ENCODE measurements at regions of chr4 and their contacts with region 1.

Region 1: DNA sequence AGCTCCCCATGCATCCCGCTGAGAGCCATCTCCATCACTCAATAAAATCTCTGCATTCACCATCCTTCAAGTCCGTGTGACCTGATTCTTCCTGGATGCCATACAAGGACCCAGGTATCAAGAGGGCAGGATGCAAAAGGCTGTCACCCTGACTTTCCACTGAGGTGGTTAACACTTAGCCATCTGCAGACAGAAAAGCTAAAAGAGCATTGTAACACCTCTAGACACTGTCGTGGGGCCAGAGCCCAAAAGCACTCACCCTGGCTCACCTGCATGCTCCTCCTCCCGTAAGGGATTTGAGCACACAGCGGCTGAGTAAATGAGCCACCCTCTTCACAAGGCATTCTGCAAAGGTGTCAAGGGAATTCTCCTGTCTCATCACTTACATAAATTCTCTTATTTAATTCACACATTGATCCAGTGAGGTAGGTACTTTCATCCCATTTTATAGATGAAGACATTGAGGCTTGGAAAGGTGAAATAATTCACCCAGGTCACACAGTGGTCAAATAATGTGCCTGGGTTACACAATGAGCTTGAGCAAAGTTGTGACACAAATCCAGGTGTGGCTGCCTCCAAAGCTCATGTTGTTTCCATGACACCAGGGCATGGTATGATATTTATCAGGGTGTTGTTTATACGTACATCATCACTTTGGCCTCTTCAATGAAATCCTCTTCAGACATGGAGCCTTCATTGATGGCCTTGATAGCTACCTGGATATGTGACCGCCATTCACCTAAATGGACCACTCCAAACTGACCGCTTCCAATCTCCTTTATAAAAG is 48.0 kb downstream of the TXK start:
- DNase-seq: no peak
- H3K4me3 ChIP-seq: no peak overlapping the region
- H3K27ac ChIP-seq: no peak overlapping the region
- H3K4me1 ChIP-seq: no peaks in the 10 kb centered on the region
- H3K27me3 ChIP-seq: no peaks in the 10 kb centered on the region
- CTCF ChIP-seq: no peak
- EP300 ChIP-seq: no peak
- POLR2A ChIP-seq: no peak

Region 2: DNA sequence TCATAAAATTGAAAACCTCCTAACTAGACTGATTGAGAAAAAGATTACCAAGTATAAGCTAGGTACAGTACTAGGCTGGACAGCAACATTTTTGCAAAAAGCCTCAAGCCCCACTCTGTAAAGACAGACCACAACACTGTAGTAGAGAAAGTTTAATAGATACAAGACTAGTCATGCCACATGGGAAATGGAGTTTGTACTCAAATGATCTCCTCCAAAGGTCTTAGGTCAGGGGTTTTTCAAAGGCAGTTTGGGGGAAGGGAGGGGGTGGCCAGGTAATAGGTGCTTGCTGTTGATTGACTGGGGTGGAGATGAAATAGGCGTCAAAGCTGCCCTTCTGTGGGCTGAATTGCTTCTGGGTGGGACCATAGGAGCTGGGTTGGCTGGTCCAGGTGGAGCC is 83.7 kb before region 1 on chr4:
- intact Hi-C with region 1: loop called (anchors 2 kb)
- DNase-seq: no peak
- H3K4me3 ChIP-seq: no peak overlapping the region
- H3K27ac ChIP-seq: no peak overlapping the region
- H3K4me1 ChIP-seq: no peaks in the 10 kb centered on the region
- H3K27me3 ChIP-seq: peaks cover 0 to 3% (median 0%) of the 10 kb centered on the region in 4 donors
- CTCF ChIP-seq: no peak
- EP300 ChIP-seq: no peak
- POLR2A ChIP-seq: no peak

Region 3: DNA sequence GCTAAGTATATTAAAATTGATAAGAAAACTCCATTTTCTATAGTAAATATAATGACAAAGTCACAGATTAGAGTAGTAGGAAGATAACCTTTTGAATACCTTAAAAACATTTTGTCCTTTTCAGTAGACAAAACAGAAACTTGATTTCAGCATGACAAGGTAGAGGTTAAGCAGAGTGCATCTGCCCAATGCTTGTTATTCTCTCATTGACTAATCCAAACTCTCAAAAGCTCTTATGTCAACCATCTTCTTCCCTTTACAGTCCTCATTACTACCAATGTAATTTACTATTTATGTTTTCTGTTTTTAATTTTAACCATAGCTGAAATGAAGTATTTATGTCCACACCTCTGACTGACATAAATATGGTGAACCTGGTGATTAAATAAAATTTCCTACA is 58.4 kb before region 1 on chr4:
- intact Hi-C with region 1: no loop called
- DNase-seq: no peak
- H3K4me3 ChIP-seq: no peak overlapping the region
- H3K27ac ChIP-seq: no peak overlapping the region
- H3K4me1 ChIP-seq: peaks cover 4 to 7% (median 5%) of the 10 kb centered on the region in 4 donors
- H3K27me3 ChIP-seq: no peaks in the 10 kb centered on the region
- CTCF ChIP-seq: no peak
- EP300 ChIP-seq: no peak
- POLR2A ChIP-seq: no peak

Region 4: DNA sequence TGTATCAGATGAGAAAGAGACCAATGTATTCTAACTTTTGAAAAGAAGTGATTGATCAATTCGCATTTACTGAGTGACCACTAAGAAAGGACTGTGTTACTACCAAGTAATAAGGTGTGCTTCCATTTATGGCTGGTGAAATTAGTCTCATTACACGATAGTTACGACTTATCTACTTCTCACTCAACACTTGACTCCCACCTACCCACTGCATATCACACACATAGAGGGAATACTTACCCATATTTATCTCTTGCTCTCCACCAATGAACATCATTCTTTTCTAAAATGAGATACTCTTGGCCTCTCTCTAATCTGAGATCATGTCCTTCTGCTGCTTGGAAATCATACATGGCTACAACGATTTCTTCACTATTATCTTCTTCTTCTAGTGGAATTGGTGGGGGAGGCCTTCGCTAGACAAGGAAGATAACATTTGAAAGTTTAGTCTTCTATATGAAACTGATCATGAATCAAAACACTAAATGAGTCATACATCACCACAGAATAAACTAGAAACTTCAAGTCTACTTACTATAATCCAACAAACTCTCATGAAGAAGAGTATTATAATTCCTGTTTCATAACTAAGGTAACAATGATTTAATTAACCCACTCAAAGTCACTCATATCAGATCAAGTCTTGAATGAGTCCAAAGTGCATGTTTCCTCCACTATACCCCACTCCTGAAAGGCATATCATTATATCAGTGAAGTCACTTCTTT is 81.7 kb after region 1 on chr4:
- intact Hi-C with region 1: no loop called
- DNase-seq: no peak
- H3K4me3 ChIP-seq: no peak overlapping the region
- H3K27ac ChIP-seq: no peak overlapping the region
- H3K4me1 ChIP-seq: no peaks in the 10 kb centered on the region
- H3K27me3 ChIP-seq: no peaks in the 10 kb centered on the region
- CTCF ChIP-seq: no peak
- EP300 ChIP-seq: no peak
- POLR2A ChIP-seq: no peak

Region 5: GRCh38 chr4:48329976-48330375 is 244.0 kb after region 1 on chr4:
- intact Hi-C with region 1: no loop called
- DNase-seq: no peak
- H3K4me3 ChIP-seq: no peak overlapping the region
- H3K27ac ChIP-seq: no peak overlapping the region
- H3K4me1 ChIP-seq: no peaks in the 10 kb centered on the region
- H3K27me3 ChIP-seq: peaks cover 0 to 10% (median 0%) of the 10 kb centered on the region in 4 donors
- CTCF ChIP-seq: no peak
- EP300 ChIP-seq: no peak
- POLR2A ChIP-seq: no peak

Measured in esophagus muscularis mucosa (tissue), 4 donors.